HEK293 (cell line): ENCODE measurements at regions of chr5 and their contacts with region 1.

Region 1: DNA sequence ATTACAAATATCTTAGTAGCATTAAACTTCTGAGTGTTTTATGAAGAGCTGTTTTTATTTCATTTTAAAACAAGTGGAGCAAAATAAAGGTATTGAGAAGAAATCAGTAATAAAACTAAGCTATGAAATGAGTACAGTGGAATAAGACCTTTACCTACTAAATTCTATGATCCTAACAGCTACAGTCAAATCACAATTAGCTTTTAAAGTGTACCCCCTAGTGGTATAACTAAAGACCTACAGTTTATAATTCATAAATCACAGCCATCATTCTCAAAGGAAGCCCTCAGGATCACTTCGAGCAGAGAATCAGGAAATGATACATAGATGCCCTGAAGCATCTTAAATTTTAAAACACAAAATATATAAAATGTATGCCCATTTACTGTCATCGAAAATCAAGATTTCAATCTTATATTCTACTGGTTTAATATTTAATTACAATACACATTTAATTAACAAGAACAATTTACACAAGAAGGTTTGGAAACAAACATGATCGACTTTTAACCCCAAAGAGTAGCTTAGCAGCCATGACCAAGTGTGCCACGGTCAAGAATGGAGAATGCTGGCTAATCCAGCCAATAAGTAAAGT is 12.3 kb downstream of the CCNH start:
- H3K4me3 ChIP-seq: no peak overlapping the region
- H3K27ac ChIP-seq: no peak overlapping the region
- H3K4me1 ChIP-seq: no peaks in the 10 kb centered on the region
- CTCF ChIP-seq: no peak

Region 2: GRCh38 chr5:87069974-87070624 is 330.3 kb before region 1 on chr5:
- CTCF ChIA-PET with region 1: interaction called, 13 read pairs
- POLR2A ChIA-PET with region 1: no interaction called
- H3K4me3 ChIP-seq: no peak overlapping the region
- H3K27ac ChIP-seq: no peak overlapping the region
- H3K4me1 ChIP-seq: no peaks in the 10 kb centered on the region
- CTCF ChIP-seq: no peak

Region 3: GRCh38 chr5:87277279-87277835 is 123.0 kb before region 1 on chr5:
- CTCF ChIA-PET with region 1: no interaction called
- POLR2A ChIA-PET with region 1: no interaction called
- H3K4me3 ChIP-seq: no peak overlapping the region
- H3K27ac ChIP-seq: no peak overlapping the region
- H3K4me1 ChIP-seq: peaks cover under 1% of the 10 kb centered on the region; the same call in 1 of the 2 replicates
- CTCF ChIP-seq: no peak

Region 4: GRCh38 chr5:87390075-87390887 is 10.1 kb before region 1 on chr5:
- CTCF ChIA-PET with region 1: interaction called, 31 read pairs
- POLR2A ChIA-PET with region 1: no interaction called
- H3K4me3 ChIP-seq: no peak overlapping the region
- H3K27ac ChIP-seq: no peak overlapping the region
- H3K4me1 ChIP-seq: no peaks in the 10 kb centered on the region
- CTCF ChIP-seq: no peak